CD4-positive, alpha-beta T cell (primary cell): ENCODE measurements at regions of chr3 and their contacts with region 1.

Region 1: DNA sequence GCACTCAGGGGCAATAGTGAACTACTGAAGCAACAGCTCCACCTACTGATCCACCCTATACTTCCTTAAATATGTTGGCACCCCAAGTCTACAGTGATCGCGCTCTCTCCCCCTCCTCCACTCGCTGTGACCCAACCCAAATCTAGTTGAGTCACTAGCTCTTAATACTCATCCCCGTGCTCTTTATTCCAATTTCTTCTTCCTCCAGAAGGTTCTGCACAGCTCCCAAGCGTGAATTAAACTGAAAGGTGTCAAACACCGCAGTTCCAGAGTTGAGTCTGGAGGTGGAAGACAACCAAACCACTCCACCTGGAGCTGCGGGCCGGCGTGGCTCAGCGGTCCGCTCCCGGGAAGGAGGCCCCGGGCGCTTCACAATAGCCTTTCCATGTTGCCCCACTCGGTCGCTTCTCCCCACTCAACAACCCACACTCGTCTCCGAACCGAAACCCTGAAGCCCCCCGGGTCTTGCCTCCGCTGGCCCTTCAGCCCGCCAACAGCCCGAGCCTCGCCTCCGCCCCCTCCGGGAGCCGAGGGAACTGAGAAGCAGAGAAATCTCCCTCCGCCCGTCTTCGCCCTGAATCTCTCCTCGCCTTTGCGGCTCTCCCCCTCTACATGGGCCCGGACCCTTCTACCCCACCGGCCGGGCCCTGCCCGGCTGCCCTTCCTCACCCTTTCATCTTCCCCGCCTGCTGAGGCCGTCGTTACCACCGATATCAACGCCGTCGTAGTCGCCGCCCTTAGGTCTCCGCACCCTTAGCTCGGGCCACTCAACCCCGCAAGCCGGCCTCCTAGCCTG is 578 bp downstream of the NAA50 start:
- DNase-seq: peak; percentile 61 to 94 (median 70)
- ATAC-seq: peak; percentile 71
- H3K4me3 ChIP-seq: peak overlapping the region; percentile 88
- H3K4me3 Mint-ChIP-seq: peak overlapping the region; percentile 94
- H3K27ac ChIP-seq: peak overlapping the region; percentile 100
- H3K27ac Mint-ChIP-seq: peak overlapping the region; percentile 100
- H3K4me1 ChIP-seq: peaks cover 27% of the 10 kb centered on the region
- H3K4me1 Mint-ChIP-seq: peaks cover 85% of the 10 kb centered on the region
- H3K27me3 ChIP-seq: no peaks in the 10 kb centered on the region
- H3K27me3 Mint-ChIP-seq: no peaks in the 10 kb centered on the region
- CTCF ChIP-seq: peak; percentile 70

Region 2: DNA sequence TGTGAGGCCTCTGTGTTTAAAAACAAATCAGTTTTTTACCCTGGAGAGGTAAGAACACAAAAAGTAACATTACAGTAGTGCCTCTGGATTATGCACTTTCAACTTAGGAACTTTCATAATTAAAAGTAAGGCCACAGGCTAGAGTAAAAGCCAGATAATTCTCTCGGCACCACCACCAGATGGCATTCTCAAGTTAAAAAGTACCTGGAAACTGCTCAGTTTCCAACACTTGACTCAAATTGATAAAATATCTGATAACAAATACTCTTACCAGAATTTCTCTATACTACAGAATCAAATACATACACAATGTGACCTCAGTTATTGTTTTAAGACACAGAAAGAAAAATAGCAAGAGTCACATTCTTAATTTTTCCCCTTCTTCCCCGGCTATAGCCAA is 250.4 kb before region 1 on chr3:
- CTCF ChIA-PET with region 1: interaction called, 7 read pairs
- POLR2A ChIA-PET with region 1: interaction called, 8 read pairs
- intact Hi-C with region 1: loop called in 1 of 2 experiments (anchors 5 kb)
- DNase-seq: peak in 12 of 14 experiments; percentile 10 to 68 (median 32)
- ATAC-seq: peak; percentile 66
- H3K4me3 ChIP-seq: no peak overlapping the region
- H3K4me3 Mint-ChIP-seq: no peak overlapping the region
- H3K27ac ChIP-seq: no peak overlapping the region
- H3K27ac Mint-ChIP-seq: no peak overlapping the region
- H3K4me1 ChIP-seq: no peaks in the 10 kb centered on the region
- H3K4me1 Mint-ChIP-seq: peaks cover 4% of the 10 kb centered on the region
- H3K27me3 ChIP-seq: no peaks in the 10 kb centered on the region
- H3K27me3 Mint-ChIP-seq: no peaks in the 10 kb centered on the region
- CTCF ChIP-seq: peak; percentile 45

Region 3: DNA sequence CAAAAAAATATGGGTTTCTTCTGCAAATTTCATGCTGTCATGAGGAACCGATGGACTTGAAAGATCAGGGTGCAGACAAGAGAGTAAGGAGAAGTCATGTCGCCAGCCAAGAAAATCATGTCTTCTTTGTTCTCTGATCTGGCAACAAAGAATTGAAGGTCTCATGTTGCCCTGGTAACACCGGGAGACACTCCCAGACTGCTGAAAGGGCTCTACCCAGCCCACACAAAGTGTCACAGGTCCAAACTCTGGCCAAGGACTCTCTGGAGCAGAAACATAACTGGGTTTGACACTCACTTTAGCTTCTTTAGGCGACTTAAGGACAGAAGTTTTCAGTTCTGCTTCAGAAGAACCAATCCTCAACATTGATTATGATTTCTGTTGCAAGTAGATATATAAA is 170.3 kb before region 1 on chr3:
- CTCF ChIA-PET with region 1: interaction called, 19 read pairs
- POLR2A ChIA-PET with region 1: no interaction called
- intact Hi-C with region 1: loop called in 1 of 2 experiments (anchors 2 kb)
- DNase-seq: no peak
- ATAC-seq: no peak
- H3K4me3 ChIP-seq: no peak overlapping the region
- H3K4me3 Mint-ChIP-seq: no peak overlapping the region
- H3K27ac ChIP-seq: no peak overlapping the region
- H3K27ac Mint-ChIP-seq: peak overlapping the region; percentile 27
- H3K4me1 ChIP-seq: no peaks in the 10 kb centered on the region
- H3K4me1 Mint-ChIP-seq: peaks cover 5% of the 10 kb centered on the region
- H3K27me3 ChIP-seq: no peaks in the 10 kb centered on the region
- H3K27me3 Mint-ChIP-seq: no peaks in the 10 kb centered on the region
- CTCF ChIP-seq: no peak

Region 4: DNA sequence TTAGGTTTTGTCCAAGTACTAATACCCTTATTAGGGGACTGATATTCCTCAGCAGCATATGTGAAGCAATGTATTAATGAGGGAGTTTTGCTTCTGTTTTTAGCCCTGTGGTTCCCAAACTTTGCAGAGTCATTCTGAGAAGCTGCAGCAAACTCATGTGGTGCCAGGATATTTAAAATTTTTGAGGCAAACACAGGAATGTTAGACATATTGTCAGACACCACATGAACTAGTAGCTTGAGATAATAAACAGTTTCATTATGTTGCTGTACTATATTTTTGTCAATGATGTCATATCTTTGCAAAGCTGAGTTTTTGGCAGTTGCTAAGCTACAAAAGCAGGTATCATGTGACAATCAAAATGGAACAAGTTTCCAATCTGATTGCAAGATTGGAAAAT is 38.0 kb after region 1 on chr3:
- CTCF ChIA-PET with region 1: no interaction called
- POLR2A ChIA-PET with region 1: interaction called, 4 read pairs
- intact Hi-C with region 1: loop called in 1 of 2 experiments (anchors 5 kb)
- DNase-seq: peak in 2 of 14 experiments; percentile 14 to 16
- ATAC-seq: no peak
- H3K4me3 ChIP-seq: no peak overlapping the region
- H3K4me3 Mint-ChIP-seq: no peak overlapping the region
- H3K27ac ChIP-seq: no peak overlapping the region
- H3K27ac Mint-ChIP-seq: no peak overlapping the region
- H3K4me1 ChIP-seq: no peaks in the 10 kb centered on the region
- H3K4me1 Mint-ChIP-seq: no peaks in the 10 kb centered on the region
- H3K27me3 ChIP-seq: no peaks in the 10 kb centered on the region
- H3K27me3 Mint-ChIP-seq: no peaks in the 10 kb centered on the region
- CTCF ChIP-seq: no peak

Region 5: DNA sequence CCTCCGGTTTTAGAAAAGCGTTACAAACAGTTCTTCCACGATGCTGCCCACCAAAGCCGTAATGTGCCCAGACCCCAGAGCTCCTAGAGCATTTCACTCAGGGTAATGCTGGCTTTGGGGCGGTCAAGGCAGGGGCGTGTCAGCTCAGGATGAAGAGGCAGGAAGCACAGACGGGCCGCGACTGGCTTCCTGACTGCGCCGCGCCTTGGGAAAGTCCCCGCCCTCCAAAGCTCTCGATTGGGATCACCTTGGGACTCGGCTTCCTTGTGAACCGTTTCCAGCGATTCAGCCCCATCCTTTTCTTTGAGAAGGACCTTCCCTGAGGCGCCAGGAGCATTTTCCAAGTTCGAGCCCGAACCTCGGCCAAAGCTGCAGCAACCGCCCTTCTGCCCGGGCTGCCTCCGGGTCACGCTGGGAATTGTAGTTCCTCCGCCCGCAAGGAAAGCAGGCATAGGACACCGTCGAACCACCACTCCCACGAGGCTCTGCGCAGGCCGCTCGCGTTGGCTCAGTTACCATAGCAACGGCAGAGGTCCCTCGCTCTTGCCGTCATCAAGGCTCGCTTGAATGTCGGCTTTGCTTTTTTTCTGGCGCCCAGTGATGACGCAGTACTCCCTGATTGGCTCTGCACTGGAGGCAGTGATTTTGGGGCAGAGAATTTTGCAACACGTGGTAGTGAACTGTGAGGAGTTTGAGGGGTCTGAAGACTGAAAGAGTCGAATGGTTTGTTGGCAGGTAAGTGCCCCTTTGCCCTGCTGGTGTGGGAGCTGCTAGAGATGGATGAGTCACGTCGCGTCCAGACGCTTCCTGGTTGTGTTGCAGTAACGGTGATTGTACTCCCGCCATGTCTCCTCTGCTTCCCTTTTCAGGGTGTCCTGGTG is 310.9 kb after region 1 on chr3 and contains the starts of genes CCDC191 and QTRT2:
- CTCF ChIA-PET with region 1: no interaction called
- POLR2A ChIA-PET with region 1: interaction called, 6 read pairs
- intact Hi-C with region 1: loop called (anchors 2 kb)
- DNase-seq: peak; percentile 93 to 100 (median 97)
- ATAC-seq: peak; percentile 95
- H3K4me3 ChIP-seq: peak within 1 kb of the TSS; percentile 88
- H3K4me3 Mint-ChIP-seq: peak within 1 kb of the TSS; percentile 95
- H3K27ac ChIP-seq: peak within 1 kb of the TSS; percentile 87 to 96
- H3K27ac Mint-ChIP-seq: peak within 1 kb of the TSS; percentile 94
- H3K4me1 ChIP-seq: peaks cover 18% of the 10 kb centered on the region
- H3K4me1 Mint-ChIP-seq: peaks cover 53% of the 10 kb centered on the region
- H3K27me3 ChIP-seq: no peaks in the 10 kb centered on the region
- H3K27me3 Mint-ChIP-seq: no peaks in the 10 kb centered on the region
- CTCF ChIP-seq: no peak
- total RNA-seq, gene CCDC191: 3.6 to 3.7 TPM
- total RNA-seq, gene QTRT2: 22.8 to 27.0 TPM

Region 6: GRCh38 chr3:115134648-115135347 is 1389.3 kb after region 1 on chr3:
- CTCF ChIA-PET with region 1: no interaction called
- POLR2A ChIA-PET with region 1: no interaction called
- intact Hi-C with region 1: no loop called
- DNase-seq: no peak
- ATAC-seq: no peak
- H3K4me3 ChIP-seq: no peak overlapping the region
- H3K4me3 Mint-ChIP-seq: no peak overlapping the region
- H3K27ac ChIP-seq: no peak overlapping the region
- H3K27ac Mint-ChIP-seq: no peak overlapping the region
- H3K4me1 ChIP-seq: no peaks in the 10 kb centered on the region
- H3K4me1 Mint-ChIP-seq: no peaks in the 10 kb centered on the region
- H3K27me3 ChIP-seq: no peaks in the 10 kb centered on the region
- H3K27me3 Mint-ChIP-seq: no peaks in the 10 kb centered on the region
- CTCF ChIP-seq: no peak